Panc1 (cell line): ENCODE measurements at regions of chr11 and their contacts with region 1.

Region 1: GRCh38 chr11:63768237-63769043 is at the start of gene ZFTA:
- DNase-seq: no peak
- ATAC-seq: peak; percentile 82
- H3K4me3 ChIP-seq: peak within 1 kb of the TSS; percentile 77 to 85
- H3K27ac ChIP-seq: peak within 1 kb of the TSS; percentile 79
- H3K4me1 ChIP-seq: peaks cover 15% of the 10 kb centered on the region
- H3K27me3 ChIP-seq: no peaks in the 10 kb centered on the region
- CTCF ChIP-seq: peak; percentile 97
- total RNA-seq, gene ZFTA: 16.1 TPM

Region 2: GRCh38 chr11:63793161-63793560 is 24.7 kb after region 1 on chr11:
- CTCF ChIA-PET with region 1: interaction called, 11 read pairs
- POLR2A ChIA-PET with region 1: no interaction called
- in situ Hi-C with region 1: no loop called
- intact Hi-C with region 1: no loop called
- DNase-seq: no peak
- ATAC-seq: no peak
- H3K4me3 ChIP-seq: no peak overlapping the region
- H3K27ac ChIP-seq: no peak overlapping the region
- H3K4me1 ChIP-seq: no peaks in the 10 kb centered on the region
- H3K27me3 ChIP-seq: no peaks in the 10 kb centered on the region
- CTCF ChIP-seq: no peak